Activated naive CD4-positive, alpha-beta T cell treated with anti-CD3 and anti-CD28 coated beads for 36 hours (primary cell): ENCODE measurements at regions of chr20 and their contacts with region 1.

Region 1: DNA sequence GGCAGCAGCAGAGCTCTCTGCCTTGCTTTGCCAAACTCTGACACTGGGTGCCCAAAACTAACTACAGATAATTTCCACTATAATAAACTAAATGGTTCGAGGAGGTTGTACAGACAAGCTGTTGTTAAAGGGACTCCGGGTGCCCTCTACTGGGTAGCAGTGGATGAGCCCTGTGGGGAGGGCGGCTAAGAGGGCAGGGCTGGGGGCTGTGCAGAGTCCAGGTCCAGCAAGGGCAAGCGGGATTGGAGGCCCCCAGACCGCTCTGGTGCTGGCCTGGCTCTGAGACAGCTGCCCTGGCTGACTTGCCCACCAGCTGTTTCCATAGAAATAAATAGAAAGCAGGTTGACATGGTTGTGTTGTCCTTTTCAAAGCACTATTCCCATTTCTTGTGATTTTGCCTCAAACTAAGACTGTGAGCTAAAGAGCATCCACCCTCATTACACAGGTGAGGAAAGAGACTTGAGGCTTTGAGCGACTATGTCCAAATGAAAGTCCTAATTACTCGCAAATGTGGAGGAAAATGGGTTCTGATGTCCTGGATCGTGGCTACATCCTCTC is 167.6 kb upstream of the CST7 start:
- DNase-seq: peak; percentile 60
- H3K4me3 Mint-ChIP-seq: no peak overlapping the region
- H3K27ac Mint-ChIP-seq: no peak overlapping the region
- H3K4me1 Mint-ChIP-seq: no peaks in the 10 kb centered on the region
- H3K27me3 Mint-ChIP-seq: peaks cover 11% of the 10 kb centered on the region

Region 2: GRCh38 chr20:23937303-23938117 is 844.0 kb before region 1 on chr20:
- CTCF ChIA-PET with region 1: no interaction called
- intact Hi-C with region 1: loop called (anchors 1 kb)
- DNase-seq: peak; percentile 78
- H3K4me3 Mint-ChIP-seq: no peak overlapping the region
- H3K27ac Mint-ChIP-seq: no peak overlapping the region
- H3K4me1 Mint-ChIP-seq: no peaks in the 10 kb centered on the region
- H3K27me3 Mint-ChIP-seq: peaks cover 2% of the 10 kb centered on the region

Region 3: GRCh38 chr20:24160563-24161375 is 620.7 kb before region 1 on chr20:
- CTCF ChIA-PET with region 1: no interaction called
- intact Hi-C with region 1: loop called (anchors 1 kb)
- DNase-seq: peak; percentile 40
- H3K4me3 Mint-ChIP-seq: no peak overlapping the region
- H3K27ac Mint-ChIP-seq: no peak overlapping the region
- H3K4me1 Mint-ChIP-seq: no peaks in the 10 kb centered on the region
- H3K27me3 Mint-ChIP-seq: peaks cover 2% of the 10 kb centered on the region

Region 4: GRCh38 chr20:24205247-24205646 is 576.3 kb before region 1 on chr20:
- CTCF ChIA-PET with region 1: no interaction called
- intact Hi-C with region 1: loop called (anchors 2 kb)
- DNase-seq: peak; percentile 14
- H3K4me3 Mint-ChIP-seq: no peak overlapping the region
- H3K27ac Mint-ChIP-seq: no peak overlapping the region
- H3K4me1 Mint-ChIP-seq: no peaks in the 10 kb centered on the region
- H3K27me3 Mint-ChIP-seq: peaks cover 4% of the 10 kb centered on the region

Region 5: DNA sequence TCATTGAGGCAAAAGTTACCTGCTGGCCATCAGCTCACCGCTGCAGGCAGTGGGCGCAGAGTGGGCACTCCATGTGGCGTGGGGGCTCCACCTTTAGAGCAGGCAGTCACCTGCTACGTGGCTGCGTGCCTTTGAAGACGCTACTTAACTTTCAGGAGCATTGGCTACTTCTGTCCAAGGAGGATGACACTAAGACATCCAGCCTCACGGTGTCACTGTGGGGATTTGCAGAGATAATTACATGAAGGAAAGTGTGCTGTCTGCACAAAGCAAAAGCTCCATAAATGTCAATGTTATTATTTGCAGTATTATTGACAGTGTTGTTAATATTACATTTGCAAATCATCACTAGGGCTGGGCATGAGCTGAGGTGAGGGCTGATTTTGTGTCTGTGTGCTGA is 478.1 kb before region 1 on chr20:
- CTCF ChIA-PET with region 1: no interaction called
- intact Hi-C with region 1: loop called (anchors 5 kb)
- DNase-seq: no peak
- H3K4me3 Mint-ChIP-seq: no peak overlapping the region
- H3K27ac Mint-ChIP-seq: no peak overlapping the region
- H3K4me1 Mint-ChIP-seq: peaks cover 2% of the 10 kb centered on the region
- H3K27me3 Mint-ChIP-seq: peaks cover 6% of the 10 kb centered on the region

Region 6: GRCh38 chr20:24917797-24918578 is 136.5 kb after region 1 on chr20:
- CTCF ChIA-PET with region 1: interaction called, 4 read pairs
- intact Hi-C with region 1: loop called (anchors 2 kb)
- DNase-seq: peak; percentile 65
- H3K4me3 Mint-ChIP-seq: no peak overlapping the region
- H3K27ac Mint-ChIP-seq: no peak overlapping the region
- H3K4me1 Mint-ChIP-seq: peaks cover 5% of the 10 kb centered on the region
- H3K27me3 Mint-ChIP-seq: peaks cover 7% of the 10 kb centered on the region